ENCODE measurements at regions of chr5 and their contacts with region 1.

Region 1: GRCh38 chr5:72611118-72611730 is 104.0 kb upstream of the ZNF366 start:
- DNase-seq: peak; percentile 69 to 83 (median 75)
- ATAC-seq: peak; percentile 89 to 99 (median 97)
- H3K4me3 ChIP-seq: peak overlapping the region in 1 of 12 donors; percentile 13
- H3K27ac ChIP-seq: no peak overlapping the region
- H3K4me1 ChIP-seq: peaks cover 0 to 8% (median 0%) of the 10 kb centered on the region in 12 donors
- H3K27me3 ChIP-seq: no peaks in the 10 kb centered on the region
- CTCF ChIP-seq: peak; percentile 88 to 99 (median 92)
- POLR2A ChIP-seq: no peak

Region 2: GRCh38 chr5:72847989-72848473 is 236.8 kb after region 1 on chr5:
- intact Hi-C with region 1: loop called in 3 of 10 experiments (anchors 5 to 10 kb)
- DNase-seq: peak; percentile 88 to 93 (median 91)
- ATAC-seq: peak; percentile 88 to 96 (median 95)
- H3K4me3 ChIP-seq: peak overlapping the region; percentile 66 to 91 (median 79)
- H3K27ac ChIP-seq: peak overlapping the region; percentile 83 to 93 (median 92)
- H3K4me1 ChIP-seq: peaks cover 0 to 87% (median 51%) of the 10 kb centered on the region in 12 donors
- H3K27me3 ChIP-seq: no peaks in the 10 kb centered on the region
- CTCF ChIP-seq: peak in 2 of 12 donors; percentile 23 to 27
- POLR2A ChIP-seq: peak in 1 of 2 donors; percentile 79